ENCODE measurements at regions of chr1 and their contacts with region 1.

Region 1: GRCh38 chr1:27102707-27103491 is 52.0 kb downstream of the SLC9A1 start:
- DNase-seq: peak; percentile 74 to 97
- H3K4me3 ChIP-seq: no peak overlapping the region
- CTCF ChIP-seq: peak in 1 of 3 donors; percentile 90
- POLR2A ChIP-seq: no peak

Region 2: DNA sequence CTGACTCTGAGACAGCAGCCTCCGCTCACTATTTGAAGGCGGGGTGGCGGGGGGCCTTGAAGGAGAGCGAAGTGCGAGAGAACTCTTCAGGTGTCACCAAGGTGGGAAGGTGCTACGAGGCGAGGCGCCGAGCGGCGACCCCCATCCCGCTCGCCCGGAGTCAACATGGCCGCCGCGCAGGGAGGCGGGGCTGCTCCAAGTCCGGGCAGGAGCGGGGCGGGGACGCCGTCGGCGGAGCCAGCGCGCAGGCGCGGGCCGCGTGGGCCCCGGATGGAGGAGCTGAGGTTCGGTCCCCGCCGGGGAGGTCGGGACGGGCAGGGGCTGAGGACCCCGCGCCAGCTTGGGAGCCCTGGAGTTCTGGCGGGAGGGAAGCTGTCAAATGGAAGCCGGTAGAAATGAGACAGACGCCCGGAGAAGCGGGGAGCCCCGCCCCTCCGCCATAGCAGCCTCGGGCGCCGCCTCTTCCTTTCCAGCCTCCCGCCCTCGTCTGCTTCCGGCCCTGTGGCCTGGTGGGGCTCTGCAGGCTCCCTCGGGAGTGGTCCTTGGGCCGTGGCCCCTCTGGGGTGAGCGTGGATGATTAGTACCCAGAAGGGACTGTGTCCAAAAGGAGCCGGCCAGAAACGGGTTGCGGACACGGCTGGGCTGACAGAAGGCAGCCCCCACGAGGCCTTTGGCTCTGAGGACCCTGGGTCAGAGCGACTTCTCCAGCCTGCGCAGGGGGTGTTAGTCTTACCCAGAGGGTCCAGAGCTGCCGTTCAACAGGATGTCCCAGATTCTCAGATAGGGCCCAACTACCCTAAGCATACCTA is 315.0 kb before region 1 on chr1 and contains the start of gene PIGV:
- intact Hi-C with region 1: no loop called
- DNase-seq: peak; percentile 82 to 97
- H3K4me3 ChIP-seq: peak within 1 kb of the TSS; percentile 69
- CTCF ChIP-seq: no peak
- POLR2A ChIP-seq: peak in 1 of 2 donors; percentile 46
- total RNA-seq, gene PIGV: 18.2 to 39.3 (median 27.1) TPM

Region 3: DNA sequence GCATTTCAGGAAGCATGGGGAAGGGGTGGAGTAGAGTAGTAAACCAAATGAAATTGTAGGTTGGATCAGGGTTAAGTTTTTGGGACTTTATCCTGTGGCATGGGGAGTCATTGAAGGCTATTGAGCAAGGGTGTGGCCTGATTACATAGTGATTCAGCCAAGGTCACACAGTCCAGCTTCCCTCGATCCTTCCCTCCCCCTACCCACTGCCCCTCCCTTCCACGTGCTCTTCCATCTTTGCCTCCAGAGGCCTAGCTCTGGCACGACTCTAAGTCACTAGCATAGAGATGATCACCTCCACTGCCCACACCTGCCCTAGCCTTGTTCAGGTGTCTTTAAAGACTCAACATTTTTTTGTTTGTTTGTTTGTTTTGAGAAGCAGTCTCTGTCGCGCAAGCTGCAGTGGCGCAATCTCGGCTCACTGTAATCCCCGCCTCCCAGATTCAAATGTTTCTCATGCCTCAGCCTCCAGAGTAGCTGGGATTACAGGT is 89.2 kb after region 1 on chr1:
- intact Hi-C with region 1: loop called (anchors 5 kb)
- DNase-seq: no peak
- H3K4me3 ChIP-seq: no peak overlapping the region
- CTCF ChIP-seq: no peak
- POLR2A ChIP-seq: no peak

Region 4: DNA sequence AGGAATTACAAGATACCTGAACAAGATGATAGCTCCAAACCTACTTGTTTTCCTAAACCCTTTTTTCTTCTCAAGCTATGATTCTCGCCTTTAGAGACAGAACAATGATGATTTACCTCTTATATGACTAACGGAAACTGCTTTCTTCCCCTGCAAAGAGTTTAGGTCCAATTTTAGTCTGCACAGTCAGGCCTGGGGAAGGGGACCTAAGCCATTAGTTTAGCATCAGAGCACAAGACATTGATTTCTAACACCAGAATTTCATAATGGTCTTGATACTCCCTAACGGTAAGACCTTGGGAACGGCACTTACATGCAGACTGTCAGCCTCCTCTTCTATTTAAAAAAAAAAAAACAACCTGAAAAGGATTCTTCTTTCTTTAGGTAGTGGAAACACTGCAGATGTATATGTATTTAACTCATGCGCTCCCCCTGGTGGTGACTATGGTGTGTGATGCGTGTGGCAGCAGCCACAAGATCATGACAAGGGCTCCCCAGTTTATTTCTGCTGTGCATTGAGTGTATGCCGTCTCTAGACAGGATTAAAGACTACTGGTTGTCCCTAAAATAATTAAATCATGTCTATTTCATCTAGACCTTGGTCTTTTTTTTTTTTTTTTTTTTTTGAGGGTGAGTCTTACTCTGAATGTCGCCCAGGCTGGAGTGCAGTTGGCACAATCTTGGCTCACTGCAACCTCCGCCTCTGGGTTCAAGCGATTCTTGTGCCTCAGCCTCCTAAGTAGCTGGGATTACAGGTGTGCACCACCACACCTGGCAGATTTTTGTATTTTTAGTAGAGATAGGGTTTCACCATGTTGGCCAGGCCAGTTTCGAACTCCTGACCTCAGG is 181.8 kb after region 1 on chr1:
- intact Hi-C with region 1: loop called (anchors 5 kb)
- DNase-seq: peak; percentile 83 to 92
- H3K4me3 ChIP-seq: no peak overlapping the region
- CTCF ChIP-seq: peak in 1 of 3 donors; percentile 35
- POLR2A ChIP-seq: no peak

Region 5: DNA sequence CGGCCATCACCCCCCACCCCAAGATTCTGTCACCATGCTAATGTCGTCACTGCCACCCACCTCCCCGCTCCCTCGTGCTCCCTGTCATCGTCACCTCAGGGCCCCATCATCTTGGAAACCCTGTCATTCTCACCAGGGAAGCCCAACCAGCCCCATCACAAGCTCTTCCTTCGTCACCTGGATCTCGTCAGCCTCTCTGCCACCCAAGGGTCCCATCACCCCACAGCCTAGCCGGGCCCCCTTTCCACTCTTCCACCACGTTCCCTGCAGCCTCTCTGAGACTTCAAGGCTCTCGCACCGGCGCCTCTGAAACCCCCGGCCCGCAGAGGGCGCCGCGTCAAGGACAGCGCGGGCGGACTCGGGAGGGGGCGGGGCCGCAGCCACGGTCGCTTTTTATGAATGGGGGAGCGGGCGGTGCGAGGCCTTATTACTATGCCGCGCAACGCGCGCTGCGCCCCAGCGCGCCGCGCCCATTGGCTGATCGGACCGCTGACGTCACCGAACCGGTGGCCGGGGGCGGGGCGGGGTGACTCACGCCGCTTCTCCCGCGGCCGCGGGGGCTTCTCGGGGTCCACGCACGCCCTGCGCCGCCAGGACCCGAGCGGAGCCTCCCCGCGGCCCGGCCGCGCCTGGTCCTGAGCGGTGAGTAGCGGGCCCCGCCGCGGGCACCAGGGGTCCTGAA is 289.3 kb after region 1 on chr1 and contains the start of gene GPR3:
- intact Hi-C with region 1: loop called (anchors 10 kb)
- DNase-seq: peak; percentile 83 to 98
- H3K4me3 ChIP-seq: peak within 1 kb of the TSS; percentile 15
- CTCF ChIP-seq: peak in 1 of 3 donors; percentile 65
- POLR2A ChIP-seq: no peak
- total RNA-seq, gene GPR3: 0.22 to 1.3 (median 0.68) TPM